ENCODE measurements at regions of chr16 and their contacts with region 1.

Region 1: DNA sequence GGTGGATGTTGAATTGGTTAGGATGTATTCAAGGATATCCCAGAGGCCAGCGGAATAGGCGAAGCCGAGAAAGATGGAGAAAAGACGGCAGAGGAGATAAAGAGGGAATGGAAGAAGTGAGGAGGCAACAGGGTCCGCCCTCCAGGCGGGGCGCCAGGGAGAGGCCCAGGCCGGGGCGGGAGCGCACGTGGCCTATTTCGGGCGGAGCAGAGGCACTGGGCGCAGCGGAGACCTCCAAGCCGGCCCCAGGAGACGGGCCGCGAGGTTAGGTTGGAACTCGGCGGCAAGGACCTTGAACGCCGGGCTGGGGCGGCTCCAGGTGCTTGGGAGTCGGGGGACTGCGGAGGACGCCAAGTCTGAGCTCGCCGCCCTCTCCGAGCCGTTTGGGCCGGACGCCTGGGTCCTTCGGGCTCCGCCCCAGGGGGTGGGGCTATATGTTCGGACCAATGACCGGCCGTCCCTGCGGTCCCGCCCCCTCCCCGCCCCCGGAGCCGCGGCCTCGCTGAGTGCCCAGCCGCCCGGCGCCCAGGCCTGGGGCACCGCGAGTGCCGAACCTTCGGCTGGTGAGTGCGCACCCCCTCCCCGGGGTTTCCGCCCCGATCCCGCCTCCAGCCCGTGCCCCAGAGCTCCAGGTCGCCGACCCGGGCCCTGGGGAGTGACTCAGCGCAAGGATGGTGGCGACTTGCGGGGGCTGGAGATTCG is at the start of gene ZNF771:
- DNase-seq: peak; percentile 97
- ATAC-seq: peak; percentile 97
- total RNA-seq, gene ZNF771: 7.5 TPM

Region 2: DNA sequence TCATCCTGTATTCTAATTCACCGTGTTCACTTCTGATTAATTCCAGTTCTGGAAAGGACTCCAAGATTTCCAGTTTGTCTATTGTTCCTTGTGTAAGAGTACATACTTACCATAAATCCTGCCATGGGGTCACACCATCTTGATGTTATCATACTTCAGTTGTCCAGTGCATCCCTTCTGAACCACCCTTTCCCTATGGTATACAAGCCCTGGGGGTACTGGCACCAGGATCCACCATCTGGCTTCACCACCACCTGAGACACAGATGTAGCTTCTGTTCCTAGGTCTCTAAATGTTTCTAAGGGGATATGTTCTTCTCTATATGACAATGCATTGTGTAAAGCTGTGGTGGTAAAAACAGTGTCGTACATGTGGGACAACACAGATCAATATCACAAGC is 1832.3 kb before region 1 on chr16:
- intact Hi-C with region 1: no loop called
- DNase-seq: no peak
- ATAC-seq: no peak

Region 3: DNA sequence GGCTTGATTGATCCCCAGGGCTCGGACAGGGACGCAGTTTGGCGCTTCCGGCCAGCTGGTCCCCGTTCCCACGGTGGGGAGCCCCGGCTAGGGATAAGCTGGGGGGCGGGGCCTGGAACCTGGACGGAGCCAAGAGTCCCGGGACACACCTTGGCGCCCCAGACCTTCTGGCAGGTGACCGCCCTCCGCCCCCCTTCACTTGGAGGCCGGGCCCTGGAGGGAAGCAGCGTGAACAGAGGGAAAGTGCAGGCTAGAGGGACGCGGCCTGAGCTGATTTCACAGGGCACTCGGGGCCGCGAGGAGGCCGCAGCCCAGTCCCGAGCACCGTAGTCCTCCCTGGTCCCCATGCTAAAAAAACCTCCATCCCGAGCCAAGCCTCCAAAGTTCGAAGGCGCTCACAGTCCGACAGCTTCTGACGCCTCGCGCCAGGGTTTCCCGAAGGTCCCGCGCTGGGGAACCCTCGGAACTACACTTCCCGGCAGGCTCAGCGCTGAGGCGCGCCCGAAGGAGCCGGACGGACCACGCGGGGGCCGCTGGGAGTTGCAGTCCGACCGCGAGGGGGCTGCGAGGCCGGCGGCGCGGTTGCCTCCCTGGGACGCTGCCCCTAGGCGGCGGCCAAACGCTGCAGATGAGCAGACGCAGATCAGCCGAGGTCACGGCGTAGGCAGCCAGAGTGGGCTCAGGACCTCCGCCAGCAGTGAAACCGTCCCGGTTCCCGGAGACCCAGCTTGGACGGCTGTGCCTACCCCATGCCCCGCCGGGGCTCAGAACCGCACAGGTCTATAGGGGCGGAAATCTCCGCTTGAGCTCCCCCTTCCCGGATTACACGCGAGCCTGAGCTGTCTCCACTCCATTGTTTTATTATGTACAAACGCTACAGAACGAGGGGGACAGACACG is 315.5 kb before region 1 on chr16 and contains the start of gene TBX6:
- intact Hi-C with region 1: loop called (anchors 10 kb)
- DNase-seq: peak; percentile 94
- ATAC-seq: peak; percentile 93
- total RNA-seq, gene TBX6: 1.7 TPM

Region 4: GRCh38 chr16:30844671-30845449 is 437.6 kb after region 1 on chr16:
- intact Hi-C with region 1: no loop called
- DNase-seq: peak; percentile 85
- ATAC-seq: peak; percentile 89

Region 5: DNA sequence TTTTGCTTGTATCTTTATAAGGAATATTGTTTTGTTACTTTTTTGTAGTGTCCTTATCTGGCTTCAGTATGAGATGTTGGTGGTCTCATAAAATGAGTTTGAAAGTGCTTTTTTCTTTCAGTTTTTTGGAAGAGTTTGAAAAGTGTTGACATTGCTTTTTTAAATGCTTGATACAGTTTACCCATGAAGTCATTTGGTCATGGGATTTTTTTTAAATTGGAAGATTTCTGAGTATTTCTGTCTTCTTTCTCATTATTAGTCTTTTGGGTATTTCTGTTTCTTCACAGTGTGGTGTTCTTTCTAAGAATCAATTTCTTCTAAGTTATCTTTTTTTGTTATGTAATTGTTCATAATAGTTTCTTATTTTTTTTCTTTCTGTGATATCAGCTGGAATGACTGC is 1481.5 kb after region 1 on chr16:
- intact Hi-C with region 1: no loop called
- DNase-seq: no peak
- ATAC-seq: peak; percentile 41

Measured in sciatic nerve (tissue), 2 donors.